ENCODE measurements at regions of chr3 and their contacts with region 1.

Region 1: GRCh38 chr3:72996473-72997333 is at the start of gene PPP4R2:
- DNase-seq: peak; percentile 88
- ATAC-seq: peak; percentile 91
- H3K4me3 ChIP-seq: peak within 1 kb of the TSS; percentile 79
- H3K27ac ChIP-seq: peak within 1 kb of the TSS; percentile 97
- H3K4me1 ChIP-seq: peaks cover 8% of the 10 kb centered on the region
- H3K27me3 ChIP-seq: no peaks in the 10 kb centered on the region
- CTCF ChIP-seq: no peak; the same call in 1 of the 2 replicates
- POLR2A ChIP-seq: peak; percentile 84
- RAD21 ChIP-seq: no peak
- total RNA-seq, gene PPP4R2: 31.4 and 60.0 TPM in 2 replicates

Region 2: DNA sequence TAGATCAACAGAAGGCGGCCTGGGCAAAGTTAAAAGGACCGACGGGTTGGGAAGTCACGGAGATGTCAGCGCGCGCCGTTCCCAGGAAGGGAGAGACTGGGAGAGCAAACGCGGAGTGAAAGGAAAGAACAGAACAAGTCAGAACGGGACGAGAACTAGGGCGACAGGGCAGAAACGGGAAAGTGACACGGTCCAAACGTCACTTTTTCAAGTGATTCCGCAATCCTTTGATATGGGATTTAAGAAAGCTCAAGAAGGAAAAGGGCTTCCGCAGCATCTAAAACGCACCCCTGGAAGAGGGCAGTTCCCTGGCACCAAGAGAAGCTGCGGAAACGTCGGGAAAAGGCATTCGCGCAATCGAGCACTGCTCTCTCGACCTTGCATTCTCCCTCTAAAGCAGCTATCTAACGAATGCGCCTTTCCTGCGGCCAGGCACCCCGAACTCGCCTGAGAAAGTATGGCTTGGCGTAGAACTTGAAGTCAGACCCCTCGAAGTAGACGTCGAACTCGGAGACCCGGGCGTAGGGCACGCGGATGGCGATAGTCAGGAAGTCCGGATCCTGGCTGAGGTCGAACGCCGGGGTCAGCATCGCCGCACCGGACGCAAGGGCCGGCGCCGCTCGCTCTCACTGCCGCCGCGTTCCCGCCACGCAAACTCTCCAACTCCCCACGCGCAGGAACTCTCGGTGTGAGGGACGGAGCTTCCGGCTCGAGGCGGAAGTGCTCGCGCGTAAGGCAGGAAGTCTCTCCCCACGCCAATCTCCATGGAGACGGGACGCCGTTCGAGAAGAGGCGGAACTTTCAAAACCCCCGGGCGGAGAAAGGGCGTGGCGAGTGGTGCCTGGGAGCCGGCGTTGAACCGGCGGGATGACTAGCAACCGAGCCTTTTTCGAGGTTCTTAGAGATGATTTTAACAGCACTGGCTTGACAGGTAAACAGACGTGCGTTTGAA is 148.7 kb before region 1 on chr3 and contains the start of gene SHQ1:
- CTCF ChIA-PET with region 1: interaction called, 6 read pairs
- POLR2A ChIA-PET with region 1: no interaction called
- dilution Hi-C with region 1: no loop called
- in situ Hi-C with region 1: no loop called
- intact Hi-C with region 1: loop called (anchors 2 kb)
- DNase-seq: peak; percentile 93
- ATAC-seq: peak; percentile 88
- H3K4me3 ChIP-seq: peak within 1 kb of the TSS; percentile 90
- H3K27ac ChIP-seq: peak within 1 kb of the TSS; percentile 65
- H3K4me1 ChIP-seq: no peaks in the 10 kb centered on the region; the same call in 1 of the 2 replicates
- H3K27me3 ChIP-seq: no peaks in the 10 kb centered on the region
- CTCF ChIP-seq: no peak
- POLR2A ChIP-seq: peak; percentile 31; the same call in 1 of the 2 replicates
- RAD21 ChIP-seq: no peak; the same call in 1 of the 2 replicates
- total RNA-seq, gene SHQ1: 19.4 and 28.6 TPM in 2 replicates

Region 3: GRCh38 chr3:72887705-72888545 is 108.8 kb before region 1 on chr3 and contains the start of gene GXYLT2:
- CTCF ChIA-PET with region 1: no interaction called
- POLR2A ChIA-PET with region 1: no interaction called
- dilution Hi-C with region 1: no loop called
- in situ Hi-C with region 1: no loop called
- intact Hi-C with region 1: loop called (anchors 5 kb)
- DNase-seq: peak; percentile 71
- ATAC-seq: peak; percentile 78
- H3K4me3 ChIP-seq: peak within 1 kb of the TSS; percentile 53
- H3K27ac ChIP-seq: peak within 1 kb of the TSS; percentile 76
- H3K4me1 ChIP-seq: peaks cover 21% of the 10 kb centered on the region
- H3K27me3 ChIP-seq: no peaks in the 10 kb centered on the region
- CTCF ChIP-seq: 0 out of 2 replicates have a peak, but pooled peaks have one; percentile 12
- POLR2A ChIP-seq: no peak
- RAD21 ChIP-seq: no peak
- total RNA-seq, gene GXYLT2: 11.1 and 11.4 TPM in 2 replicates

Region 4: DNA sequence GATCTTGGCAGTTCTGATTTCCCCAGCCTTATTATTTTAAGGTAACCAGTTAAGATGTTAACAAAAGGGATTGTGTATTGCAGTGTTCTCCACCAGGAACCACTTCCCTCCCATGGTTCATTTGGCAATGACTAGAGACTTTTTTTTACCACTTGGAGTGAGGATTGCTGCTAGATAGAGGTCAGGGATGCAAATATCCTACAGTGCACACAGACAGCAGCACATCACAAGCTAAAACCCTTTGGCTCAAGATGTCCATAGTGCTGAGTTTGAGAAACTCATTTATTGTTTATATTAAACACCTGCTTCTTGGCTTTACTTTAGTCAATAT is 40.6 kb after region 1 on chr3:
- CTCF ChIA-PET with region 1: no interaction called
- POLR2A ChIA-PET with region 1: no interaction called
- dilution Hi-C with region 1: no loop called
- in situ Hi-C with region 1: no loop called
- intact Hi-C with region 1: loop called (anchors 5 kb)
- DNase-seq: peak; percentile 41
- ATAC-seq: peak; percentile 55
- H3K4me3 ChIP-seq: no peak overlapping the region
- H3K27ac ChIP-seq: no peak overlapping the region
- H3K4me1 ChIP-seq: peaks cover 12% of the 10 kb centered on the region
- H3K27me3 ChIP-seq: no peaks in the 10 kb centered on the region
- CTCF ChIP-seq: no peak
- POLR2A ChIP-seq: no peak
- RAD21 ChIP-seq: no peak

Region 5: DNA sequence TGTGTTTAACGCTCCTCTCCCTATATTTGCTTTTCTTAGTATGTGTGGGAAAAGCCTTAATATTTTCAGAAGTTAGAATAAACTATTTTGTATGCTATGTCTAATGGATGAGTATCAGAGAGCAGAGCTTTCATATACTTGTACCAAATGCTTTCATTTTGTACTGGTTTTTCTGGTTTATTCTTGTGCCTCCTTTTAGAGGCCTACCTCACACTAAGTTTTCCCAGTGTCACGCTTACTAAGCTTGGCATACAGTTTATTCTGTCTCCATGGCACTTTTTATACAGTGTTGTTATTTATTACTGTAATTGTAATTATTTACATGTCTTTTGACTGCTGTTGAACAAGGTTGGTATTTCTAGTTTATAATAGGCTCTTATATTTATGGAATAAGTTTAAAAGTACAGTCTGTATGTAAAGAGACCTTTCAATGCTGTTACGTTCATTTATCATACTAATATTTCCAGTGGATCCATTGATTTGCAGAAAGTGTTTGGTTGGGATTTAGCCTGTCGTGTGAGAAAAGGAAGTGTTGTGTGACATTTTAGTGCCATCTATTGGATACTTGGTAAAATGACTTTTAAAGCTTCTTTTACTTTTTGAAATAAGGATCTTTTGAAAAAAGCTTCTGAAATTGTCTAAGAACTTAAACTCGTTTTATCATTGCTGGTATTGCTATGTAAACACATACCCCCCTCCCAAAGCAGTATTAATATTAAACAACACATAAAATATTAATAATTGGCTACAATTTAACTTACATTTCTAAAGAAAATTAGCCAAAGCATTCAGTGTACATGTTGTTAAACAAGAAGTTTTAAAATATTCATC is 59.5 kb after region 1 on chr3:
- CTCF ChIA-PET with region 1: no interaction called
- POLR2A ChIA-PET with region 1: no interaction called
- dilution Hi-C with region 1: no loop called
- in situ Hi-C with region 1: no loop called
- intact Hi-C with region 1: loop called (anchors 5 kb)
- DNase-seq: peak; percentile 62
- ATAC-seq: peak; percentile 65
- H3K4me3 ChIP-seq: no peak overlapping the region
- H3K27ac ChIP-seq: no peak overlapping the region
- H3K4me1 ChIP-seq: no peaks in the 10 kb centered on the region; the same call in 1 of the 2 replicates
- H3K27me3 ChIP-seq: no peaks in the 10 kb centered on the region
- CTCF ChIP-seq: peak; percentile 59
- POLR2A ChIP-seq: no peak
- RAD21 ChIP-seq: peak; percentile 74

Region 6: DNA sequence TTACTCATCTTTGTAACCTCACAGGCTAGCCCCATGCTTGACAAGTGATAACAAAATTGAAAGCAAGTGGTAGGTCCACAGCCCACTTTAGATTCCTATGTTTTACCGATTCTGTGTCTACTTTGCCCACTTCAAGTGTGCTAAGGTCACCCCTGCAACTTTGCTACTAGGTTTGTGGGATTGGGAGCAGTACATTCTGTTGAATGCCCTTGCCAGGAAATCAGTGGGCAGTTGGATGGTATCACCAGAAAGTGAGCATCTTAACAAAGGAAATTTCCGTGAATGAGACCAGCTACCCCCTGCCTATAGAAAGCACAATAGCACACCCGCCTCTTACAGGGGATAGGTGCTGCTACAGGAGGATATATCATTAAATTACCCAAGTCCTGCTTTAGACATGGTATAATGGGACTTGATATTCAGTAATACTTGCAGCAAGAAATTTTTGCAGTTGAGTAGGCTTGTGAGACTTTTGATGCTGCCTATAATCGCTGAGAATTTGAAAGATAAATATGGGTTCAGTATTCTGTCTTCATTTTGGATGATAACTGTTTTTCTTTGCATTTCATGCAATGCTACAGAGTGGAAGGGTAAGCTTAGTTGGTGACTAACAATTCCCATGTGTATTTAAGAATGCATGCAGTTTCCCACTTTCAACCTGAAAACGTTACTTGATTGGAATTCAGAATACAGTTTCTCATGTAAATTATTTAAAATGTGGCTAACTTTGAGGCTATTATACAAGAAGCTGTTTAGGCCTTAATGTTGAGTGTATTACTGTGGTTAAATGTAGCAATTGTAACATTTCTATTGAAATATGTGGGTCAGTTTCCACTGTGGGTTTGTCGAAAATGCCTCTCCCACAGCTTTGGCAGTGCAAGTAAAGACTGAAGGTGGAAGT is 74.2 kb after region 1 on chr3:
- CTCF ChIA-PET with region 1: no interaction called
- POLR2A ChIA-PET with region 1: no interaction called
- dilution Hi-C with region 1: no loop called
- in situ Hi-C with region 1: no loop called
- intact Hi-C with region 1: loop called (anchors 5 kb)
- DNase-seq: peak; percentile 92
- ATAC-seq: peak; percentile 81
- H3K4me3 ChIP-seq: no peak overlapping the region
- H3K27ac ChIP-seq: peak overlapping the region; percentile 61
- H3K4me1 ChIP-seq: peaks cover 22% of the 10 kb centered on the region
- H3K27me3 ChIP-seq: no peaks in the 10 kb centered on the region
- CTCF ChIP-seq: no peak
- POLR2A ChIP-seq: no peak
- RAD21 ChIP-seq: no peak

Region 7: DNA sequence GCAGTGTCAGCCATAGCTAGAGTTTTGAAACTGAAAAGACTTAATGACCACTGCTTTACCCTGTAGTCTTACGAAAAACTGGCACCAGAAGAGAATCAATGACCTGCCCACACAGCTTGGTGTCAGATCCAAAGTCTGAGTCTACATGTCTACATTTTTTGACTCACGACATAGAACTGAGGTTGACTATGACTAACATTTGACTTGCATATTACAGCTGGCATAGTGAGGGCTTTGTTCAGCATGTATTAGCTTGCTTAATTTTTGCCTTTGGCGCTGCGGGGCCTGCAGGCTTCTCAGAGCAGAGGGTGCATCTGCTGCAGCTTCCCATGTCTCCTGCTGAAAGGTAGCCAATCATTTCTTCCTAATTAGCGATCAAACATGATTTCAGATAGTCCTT is 231.7 kb after region 1 on chr3:
- CTCF ChIA-PET with region 1: no interaction called
- POLR2A ChIA-PET with region 1: no interaction called
- dilution Hi-C with region 1: no loop called
- in situ Hi-C with region 1: no loop called
- intact Hi-C with region 1: no loop called
- DNase-seq: no peak
- ATAC-seq: no peak
- H3K4me3 ChIP-seq: no peak overlapping the region
- H3K27ac ChIP-seq: no peak overlapping the region
- H3K4me1 ChIP-seq: no peaks in the 10 kb centered on the region
- H3K27me3 ChIP-seq: no peaks in the 10 kb centered on the region
- CTCF ChIP-seq: no peak
- POLR2A ChIP-seq: no peak
- RAD21 ChIP-seq: no peak

Region 8: GRCh38 chr3:73580343-73580742 is 583.6 kb after region 1 on chr3:
- CTCF ChIA-PET with region 1: no interaction called
- POLR2A ChIA-PET with region 1: no interaction called
- dilution Hi-C with region 1: no loop called
- in situ Hi-C with region 1: no loop called
- intact Hi-C with region 1: no loop called
- DNase-seq: peak; percentile 100
- ATAC-seq: peak; percentile 83
- H3K4me3 ChIP-seq: no peak overlapping the region
- H3K27ac ChIP-seq: peak overlapping the region; percentile 13; the same call in 1 of the 2 replicates
- H3K4me1 ChIP-seq: peaks cover 6% of the 10 kb centered on the region
- H3K27me3 ChIP-seq: no peaks in the 10 kb centered on the region
- CTCF ChIP-seq: no peak
- POLR2A ChIP-seq: no peak
- RAD21 ChIP-seq: peak; percentile 8; the same call in 1 of the 2 replicates